Mammary epithelial cell (primary cell): ENCODE measurements at regions of chr19 and their contacts with region 1.

Region 1: DNA sequence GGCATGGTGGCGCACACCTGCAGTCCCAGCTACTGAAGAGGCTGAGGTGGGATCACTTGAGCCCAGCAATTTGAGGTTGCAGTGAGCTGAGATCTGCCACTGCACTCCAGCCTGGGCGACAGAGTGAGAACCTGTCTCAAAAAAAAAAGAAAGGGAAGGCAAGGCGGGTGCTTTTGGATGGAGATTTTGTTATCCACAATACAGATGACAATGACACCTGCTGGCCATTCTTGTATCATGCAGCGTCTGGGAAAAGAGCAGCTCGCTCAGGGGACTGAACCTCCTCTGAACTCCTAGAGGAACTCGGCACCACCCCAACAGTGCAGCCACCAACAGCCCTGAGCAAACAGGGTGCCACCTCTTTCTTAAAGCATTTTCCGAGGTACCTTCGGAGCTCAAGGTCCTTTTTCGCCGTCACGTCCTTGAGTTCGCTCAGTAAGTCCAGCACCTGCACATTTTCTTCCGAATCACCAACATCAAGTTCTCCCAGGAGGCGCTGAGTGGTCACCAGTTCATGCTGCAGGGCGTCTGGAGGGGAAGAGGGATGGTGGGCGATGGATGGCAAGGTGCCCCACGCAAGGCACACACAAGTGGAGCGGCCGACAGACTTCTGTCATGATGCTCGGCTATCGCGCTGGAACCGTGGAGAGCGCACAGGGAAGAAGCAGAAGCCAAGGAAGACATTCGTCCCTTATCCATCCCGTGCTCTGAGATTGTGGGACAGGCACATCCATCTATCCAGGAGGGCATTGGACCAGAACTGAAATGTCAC is 22.6 kb downstream of the HAUS8 start:
- DNase-seq: peak; percentile 34
- H3K4me3 ChIP-seq: no peak overlapping the region
- H3K27ac ChIP-seq: no peak overlapping the region
- H3K4me1 ChIP-seq: no peaks in the 10 kb centered on the region
- H3K27me3 ChIP-seq: no peaks in the 10 kb centered on the region
- CTCF ChIP-seq: peak; percentile 49 to 71

Region 2: DNA sequence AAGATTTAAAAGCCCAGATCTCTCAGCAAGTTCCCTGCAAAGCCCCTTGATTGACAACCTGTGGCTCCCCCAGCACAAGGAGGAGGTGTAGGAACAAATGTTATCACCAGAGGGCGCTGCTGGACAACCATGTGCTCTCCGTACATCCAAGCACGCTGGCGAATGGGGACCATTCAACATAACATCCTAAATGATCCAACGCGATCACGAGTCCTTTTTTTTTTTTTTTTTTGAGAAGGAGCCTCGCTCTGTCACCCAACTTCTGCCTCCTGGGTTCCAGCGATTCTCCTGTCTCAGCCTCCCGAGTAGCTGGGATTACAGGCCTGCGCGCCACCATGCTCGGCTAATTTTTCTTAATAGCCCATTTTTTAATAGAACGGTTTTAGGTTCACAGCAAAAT is 281.0 kb before region 1 on chr19:
- CTCF ChIA-PET with region 1: no interaction called
- dilution Hi-C with region 1: no loop called
- in situ Hi-C with region 1: no loop called
- intact Hi-C with region 1: loop called (anchors 1 kb)
- DNase-seq: peak; percentile 55
- H3K4me3 ChIP-seq: no peak overlapping the region
- H3K27ac ChIP-seq: no peak overlapping the region
- H3K4me1 ChIP-seq: peaks cover 3% of the 10 kb centered on the region
- H3K27me3 ChIP-seq: no peaks in the 10 kb centered on the region
- CTCF ChIP-seq: peak; percentile 81 to 86

Region 3: DNA sequence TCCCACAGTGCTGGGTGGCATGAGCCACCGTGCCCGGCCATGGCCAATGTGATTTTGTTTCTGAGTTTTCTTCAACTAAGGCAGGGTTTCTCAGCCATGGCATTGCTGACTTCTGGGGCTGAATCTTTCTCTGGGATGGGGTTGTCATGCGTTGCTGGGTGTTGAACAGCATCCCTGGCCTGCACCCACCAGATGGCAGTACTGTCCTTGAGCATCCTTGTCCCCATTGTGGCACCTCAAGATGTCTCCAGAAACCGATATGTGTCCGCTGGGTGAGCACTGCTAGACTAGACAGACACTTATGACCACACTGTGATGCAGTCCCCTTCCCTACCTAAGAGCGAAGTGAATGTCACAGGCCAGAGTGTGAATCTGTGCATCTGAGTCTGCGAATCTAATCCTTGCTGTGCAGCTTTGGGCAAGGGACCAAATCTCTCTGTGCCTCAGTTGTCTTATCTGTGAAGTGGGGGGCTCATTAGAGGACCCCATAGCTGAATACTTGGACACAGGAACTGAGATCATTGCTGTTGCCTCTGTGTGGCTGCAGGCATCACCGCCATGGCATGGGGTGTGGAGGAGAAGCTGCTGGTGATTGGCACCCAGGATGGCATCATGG is 273.7 kb before region 1 on chr19:
- CTCF ChIA-PET with region 1: no interaction called
- dilution Hi-C with region 1: no loop called
- in situ Hi-C with region 1: loop called in 1 of 2 experiments (anchors 10 kb)
- intact Hi-C with region 1: loop called (anchors 1 kb)
- DNase-seq: peak; percentile 40
- H3K4me3 ChIP-seq: no peak overlapping the region
- H3K27ac ChIP-seq: no peak overlapping the region
- H3K4me1 ChIP-seq: no peaks in the 10 kb centered on the region
- H3K27me3 ChIP-seq: no peaks in the 10 kb centered on the region
- CTCF ChIP-seq: peak; percentile 58 to 87

Region 4: DNA sequence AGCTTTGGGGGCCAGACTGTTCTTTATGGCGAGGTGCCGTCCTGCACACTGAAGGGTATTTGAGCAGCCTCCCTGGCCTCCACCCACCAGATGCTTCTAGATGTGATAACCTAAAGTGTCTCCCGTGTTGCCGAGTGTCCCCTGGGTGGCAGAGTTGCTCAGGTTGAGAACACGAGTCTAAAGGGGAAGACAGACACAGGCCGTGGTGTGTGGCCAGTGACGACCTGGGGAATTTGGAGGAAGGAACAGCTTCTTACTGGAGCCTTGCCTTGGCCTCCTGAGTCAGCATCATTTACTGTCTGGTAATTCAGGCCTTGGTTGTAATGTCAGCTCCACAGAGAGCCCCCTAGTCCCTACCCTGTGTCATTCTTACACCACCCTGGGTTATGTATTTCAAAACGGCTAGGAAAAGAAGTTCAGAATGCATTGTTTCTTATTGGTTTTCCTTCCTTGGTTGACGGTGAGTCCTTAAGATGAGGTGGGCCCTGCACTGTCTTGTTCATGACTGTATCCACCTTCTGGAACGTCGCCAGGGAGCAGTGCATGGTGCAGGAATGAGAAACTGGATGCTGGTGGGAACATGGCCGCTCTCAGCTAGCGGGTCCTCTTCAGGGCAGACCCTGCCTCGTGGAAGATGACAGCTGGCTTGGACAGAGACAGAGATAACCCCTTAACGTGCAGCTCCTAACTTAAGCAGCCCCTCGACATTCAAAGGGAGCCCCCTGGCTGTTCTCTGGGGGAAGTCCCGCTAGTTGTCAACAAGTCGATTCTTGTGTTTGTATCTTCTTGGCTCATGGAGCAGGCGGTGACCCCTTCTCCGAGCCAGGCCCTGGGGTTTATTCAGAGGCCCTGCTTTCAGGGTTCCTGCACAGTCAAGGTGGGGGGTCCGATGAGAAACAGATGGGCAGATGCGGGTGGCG is 216.2 kb before region 1 on chr19:
- CTCF ChIA-PET with region 1: no interaction called
- dilution Hi-C with region 1: no loop called
- in situ Hi-C with region 1: no loop called
- intact Hi-C with region 1: loop called (anchors 1 kb)
- DNase-seq: peak; percentile 54
- H3K4me3 ChIP-seq: no peak overlapping the region
- H3K27ac ChIP-seq: peak overlapping the region; percentile 8
- H3K4me1 ChIP-seq: peaks cover 18% of the 10 kb centered on the region
- H3K27me3 ChIP-seq: no peaks in the 10 kb centered on the region
- CTCF ChIP-seq: peak in 1 of 2 donors; percentile 26

Region 5: DNA sequence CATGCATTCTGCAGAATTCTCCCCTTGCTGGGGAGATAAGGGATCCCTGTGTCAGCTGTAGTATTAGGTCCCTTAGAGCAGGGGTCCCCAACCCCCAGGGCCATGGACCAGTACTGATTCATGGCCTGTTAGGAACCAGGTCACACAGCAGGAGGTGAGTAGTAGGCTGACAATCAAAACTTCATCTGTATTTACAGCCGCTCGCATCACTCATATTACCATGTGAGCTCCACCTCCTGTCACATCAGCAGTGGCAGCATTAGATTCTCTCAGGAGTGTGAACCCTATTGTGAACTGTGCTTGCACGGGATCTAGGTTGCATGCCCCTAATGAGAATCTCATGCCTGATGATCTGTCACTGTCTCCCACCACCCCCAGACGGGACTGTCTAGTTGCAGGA is 64.0 kb before region 1 on chr19:
- CTCF ChIA-PET with region 1: no interaction called
- dilution Hi-C with region 1: no loop called
- in situ Hi-C with region 1: no loop called
- intact Hi-C with region 1: no loop called
- DNase-seq: no peak
- H3K4me3 ChIP-seq: no peak overlapping the region
- H3K27ac ChIP-seq: no peak overlapping the region
- H3K4me1 ChIP-seq: no peaks in the 10 kb centered on the region
- H3K27me3 ChIP-seq: no peaks in the 10 kb centered on the region
- CTCF ChIP-seq: no peak

Region 6: GRCh38 chr19:17159466-17160393 is 107.1 kb after region 1 on chr19:
- CTCF ChIA-PET with region 1: no interaction called
- dilution Hi-C with region 1: no loop called
- in situ Hi-C with region 1: no loop called
- intact Hi-C with region 1: no loop called
- DNase-seq: peak; percentile 16
- H3K4me3 ChIP-seq: no peak overlapping the region
- H3K27ac ChIP-seq: no peak overlapping the region
- H3K4me1 ChIP-seq: no peaks in the 10 kb centered on the region
- H3K27me3 ChIP-seq: no peaks in the 10 kb centered on the region
- CTCF ChIP-seq: no peak